ENCODE measurements at regions of chr14 and their contacts with region 1.

Region 1: DNA sequence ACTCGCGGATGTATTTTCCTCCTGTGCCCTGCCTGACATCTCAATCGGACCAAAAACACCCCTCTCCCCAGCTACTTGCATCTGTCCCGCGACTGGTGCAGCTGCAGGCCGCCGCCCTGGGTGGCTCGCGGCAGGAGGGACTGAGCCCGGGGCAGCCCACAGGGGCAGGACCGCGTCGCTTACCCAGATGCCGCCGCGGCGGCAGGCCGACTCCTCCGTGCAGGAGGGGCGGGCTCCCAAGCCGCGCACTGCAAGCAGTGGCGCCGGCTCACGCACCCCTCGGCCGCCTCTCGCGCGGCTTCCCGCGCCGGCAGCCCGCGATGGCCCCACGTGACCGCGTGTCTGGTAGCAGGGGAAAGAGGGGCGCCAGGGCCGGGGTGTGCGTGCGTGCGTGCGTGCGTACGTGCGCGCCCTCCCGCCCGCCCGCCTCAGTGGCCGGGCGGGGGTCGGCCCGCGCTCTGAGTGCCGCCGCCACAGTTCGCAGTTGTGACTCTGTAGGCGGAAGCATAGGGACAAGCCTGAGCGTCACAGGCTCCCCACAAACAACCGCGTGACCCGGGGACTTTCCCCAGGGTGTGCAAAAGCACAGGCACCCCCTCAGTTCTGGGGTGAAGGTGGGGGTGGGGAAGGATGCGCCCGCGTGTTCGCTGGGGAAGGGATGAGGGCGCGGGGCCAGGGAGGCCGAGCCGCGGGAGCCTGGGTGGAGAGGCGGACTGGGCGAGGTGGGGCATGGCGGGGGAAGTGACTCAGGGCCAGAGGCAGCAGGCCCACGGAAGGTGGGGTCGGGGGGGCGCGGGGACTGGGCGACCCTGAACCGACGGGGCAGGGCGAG is at the start of gene ZBTB25:
- H3K4me3 Mint-ChIP-seq: peak within 1 kb of the TSS; percentile 86
- H3K27ac Mint-ChIP-seq: peak within 1 kb of the TSS; percentile 100
- H3K4me1 Mint-ChIP-seq: peaks cover 53% of the 10 kb centered on the region
- H3K27me3 Mint-ChIP-seq: no peaks in the 10 kb centered on the region

Region 2: DNA sequence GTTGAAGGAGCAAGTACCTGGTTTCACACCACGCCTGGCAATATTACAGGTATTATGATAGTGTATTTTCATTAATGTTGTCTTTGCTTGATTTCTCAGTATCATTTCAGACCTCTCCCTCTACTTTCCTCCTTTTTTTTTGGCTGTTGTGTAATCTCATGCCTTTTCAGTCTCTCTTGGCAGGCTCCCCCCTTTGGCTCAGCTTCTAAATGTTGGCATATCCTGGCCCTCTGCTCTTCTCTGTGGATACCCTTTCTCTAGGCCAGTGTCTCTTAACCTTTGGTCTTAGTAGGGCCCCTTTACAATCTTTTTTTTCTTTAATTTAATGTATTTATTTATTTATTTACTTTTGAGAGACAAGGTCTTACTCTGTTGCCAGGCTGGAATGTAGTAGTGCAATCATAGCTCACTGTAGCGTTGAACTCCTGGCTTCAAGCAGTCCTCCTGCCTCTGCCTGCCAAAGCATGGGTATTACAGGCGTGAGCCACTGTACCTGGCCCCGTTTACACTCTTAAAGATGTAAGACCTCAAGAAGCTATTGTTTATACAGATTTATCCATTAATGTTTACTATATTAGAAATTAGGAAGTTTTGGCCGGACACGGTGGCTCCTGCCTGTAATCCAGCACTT is 102.8 kb before region 1 on chr14:
- intact Hi-C with region 1: no loop called
- H3K4me3 Mint-ChIP-seq: no peak overlapping the region
- H3K27ac Mint-ChIP-seq: no peak overlapping the region
- H3K4me1 Mint-ChIP-seq: peaks cover 19% of the 10 kb centered on the region
- H3K27me3 Mint-ChIP-seq: no peaks in the 10 kb centered on the region

Region 3: GRCh38 chr14:64491637-64492036 is 12.1 kb before region 1 on chr14:
- intact Hi-C with region 1: no loop called
- H3K4me3 Mint-ChIP-seq: no peak overlapping the region
- H3K27ac Mint-ChIP-seq: no peak overlapping the region
- H3K4me1 Mint-ChIP-seq: peaks cover 6% of the 10 kb centered on the region
- H3K27me3 Mint-ChIP-seq: no peaks in the 10 kb centered on the region

Region 4: DNA sequence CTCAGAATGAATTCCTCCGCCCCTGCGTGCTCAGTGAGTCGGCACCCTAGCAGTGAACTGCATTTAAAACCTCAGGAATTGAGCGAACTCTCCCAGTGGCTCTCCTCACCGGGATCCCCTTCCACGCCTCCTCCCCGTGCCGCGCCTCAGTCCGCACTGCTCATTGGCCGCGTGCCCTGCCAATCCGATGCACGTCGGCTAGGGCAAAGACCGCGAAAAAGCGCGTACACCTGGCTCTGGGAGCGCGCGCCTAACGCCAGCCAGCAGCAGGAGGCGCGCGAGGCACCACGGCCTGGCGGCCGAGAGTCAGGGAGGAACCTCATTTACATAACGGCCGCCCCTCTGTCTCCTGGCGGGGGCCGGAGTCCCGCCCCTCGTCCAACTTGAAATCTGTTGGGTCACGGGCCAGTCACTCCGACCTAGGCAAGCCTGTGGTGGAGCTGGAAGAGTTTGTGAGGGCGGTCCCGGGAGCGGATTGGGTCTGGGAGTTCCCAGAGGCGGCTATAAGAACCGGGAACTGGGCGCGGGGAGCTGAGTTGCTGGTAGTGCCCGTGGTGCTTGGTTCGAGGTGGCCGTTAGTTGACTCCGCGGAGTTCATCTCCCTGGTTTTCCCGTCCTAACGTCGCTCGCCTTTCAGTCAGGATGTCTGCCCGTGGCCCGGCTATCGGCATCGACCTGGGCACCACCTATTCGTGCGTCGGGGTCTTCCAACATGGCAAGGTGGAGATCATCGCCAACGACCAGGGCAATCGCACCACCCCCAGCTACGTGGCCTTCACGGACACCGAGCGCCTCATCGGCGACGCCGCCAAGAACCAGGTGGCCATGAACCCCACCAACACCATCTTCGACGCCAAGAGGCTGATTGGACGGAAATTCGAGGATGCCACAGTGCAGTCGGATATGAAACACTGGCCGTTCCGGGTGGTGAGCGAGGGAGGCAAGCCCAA is 36.8 kb after region 1 on chr14 and contains the start of gene HSPA2:
- intact Hi-C with region 1: loop called (anchors 2 kb)
- H3K4me3 Mint-ChIP-seq: peak within 1 kb of the TSS; percentile 91
- H3K27ac Mint-ChIP-seq: peak within 1 kb of the TSS; percentile 91
- H3K4me1 Mint-ChIP-seq: peaks cover 34% of the 10 kb centered on the region
- H3K27me3 Mint-ChIP-seq: peaks cover 50% of the 10 kb centered on the region

Measured in dendritic cell treated with granulocyte-macrophage colony-stimulating factor and Interleukin-4, amounts not matched to agents 40 ng/mL and 50 ng/mL, for 4 days (primary cell).